IMR-90 (cell line): ENCODE measurements at regions of chr2 and their contacts with region 1.

Region 1: GRCh38 chr2:139773720-139774277 is 993.6 kb upstream of the NXPH2 start:
- DNase-seq: no peak
- ATAC-seq: no peak
- H3K4me3 ChIP-seq: no peak overlapping the region
- H3K27ac ChIP-seq: no peak overlapping the region
- H3K4me1 ChIP-seq: no peaks in the 10 kb centered on the region
- H3K27me3 ChIP-seq: no peaks in the 10 kb centered on the region
- CTCF ChIP-seq: no peak
- POLR2A ChIP-seq: no peak
- RAD21 ChIP-seq: no peak

Region 2: DNA sequence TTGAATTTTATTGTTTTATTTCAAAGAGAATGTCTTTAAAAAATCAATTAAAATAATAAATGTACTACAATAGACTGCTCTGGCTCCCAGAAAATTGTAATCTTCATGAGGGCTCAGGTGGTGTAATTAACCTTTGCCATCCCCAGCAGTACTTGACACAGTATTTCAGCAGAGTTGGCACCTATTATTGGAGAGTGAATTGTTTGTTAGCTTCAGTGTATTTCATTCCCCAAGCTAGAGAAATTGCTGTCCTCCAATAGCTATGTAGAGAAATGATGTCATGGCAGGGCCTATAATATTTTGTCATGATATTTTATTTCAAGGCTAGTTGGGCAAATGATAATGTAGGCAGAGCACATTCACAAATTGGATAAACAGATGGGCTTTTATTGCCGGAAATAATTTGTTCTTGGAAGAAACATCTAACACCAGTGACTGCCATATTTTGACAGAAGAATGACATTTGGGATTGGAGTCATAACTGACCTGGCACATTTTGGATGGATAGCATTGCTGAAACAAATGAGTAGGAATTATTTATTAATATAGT is 281.6 kb before region 1 on chr2:
- CTCF ChIA-PET with region 1: no interaction called
- POLR2A ChIA-PET with region 1: no interaction called
- dilution Hi-C with region 1: no loop called
- in situ Hi-C with region 1: no loop called
- intact Hi-C with region 1: loop called (anchors 10 kb)
- DNase-seq: no peak
- ATAC-seq: no peak
- H3K4me3 ChIP-seq: no peak overlapping the region
- H3K27ac ChIP-seq: no peak overlapping the region
- H3K4me1 ChIP-seq: no peaks in the 10 kb centered on the region
- H3K27me3 ChIP-seq: no peaks in the 10 kb centered on the region
- CTCF ChIP-seq: no peak
- POLR2A ChIP-seq: no peak
- RAD21 ChIP-seq: no peak

Region 3: DNA sequence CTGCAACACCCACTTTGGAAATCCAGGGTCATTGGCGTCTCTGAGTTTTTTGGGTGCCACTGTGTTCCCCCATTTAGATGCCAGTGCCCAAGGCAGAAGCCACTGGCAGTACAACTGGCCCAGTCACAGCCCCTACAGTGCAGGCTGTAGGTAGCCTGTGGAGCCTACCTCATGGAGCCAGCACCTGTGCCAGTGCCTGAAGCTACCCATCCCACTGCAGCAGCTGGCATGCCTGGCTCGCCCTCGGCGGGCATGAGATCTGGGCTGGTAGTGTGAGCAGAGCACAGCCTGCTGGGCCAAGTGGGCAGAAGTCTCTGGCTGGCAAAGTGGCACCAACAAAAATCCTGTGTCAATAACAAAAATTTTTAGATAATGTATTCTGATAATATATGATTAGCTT is 117.8 kb after region 1 on chr2:
- CTCF ChIA-PET with region 1: no interaction called
- POLR2A ChIA-PET with region 1: no interaction called
- dilution Hi-C with region 1: no loop called
- in situ Hi-C with region 1: no loop called
- intact Hi-C with region 1: no loop called
- DNase-seq: no peak
- ATAC-seq: no peak
- H3K4me3 ChIP-seq: no peak overlapping the region
- H3K27ac ChIP-seq: no peak overlapping the region
- H3K4me1 ChIP-seq: no peaks in the 10 kb centered on the region
- H3K27me3 ChIP-seq: no peaks in the 10 kb centered on the region
- CTCF ChIP-seq: no peak
- POLR2A ChIP-seq: no peak
- RAD21 ChIP-seq: no peak